Transverse colon (tissue), 4 donors: ENCODE measurements at regions of chr2 and their contacts with region 1.

Region 1: GRCh38 chr2:12120281-12121150 is 374.1 kb downstream of the LPIN1 start:
- DNase-seq: no peak
- H3K4me3 ChIP-seq: no peak overlapping the region
- H3K27ac ChIP-seq: no peak overlapping the region
- H3K4me1 ChIP-seq: no peaks in the 10 kb centered on the region
- H3K27me3 ChIP-seq: no peaks in the 10 kb centered on the region
- CTCF ChIP-seq: no peak
- EP300 ChIP-seq: no peak
- POLR2A ChIP-seq: no peak

Region 2: GRCh38 chr2:11802782-11803191 is 317.7 kb before region 1 on chr2:
- in situ Hi-C with region 1: no loop called
- intact Hi-C with region 1: no loop called
- DNase-seq: no peak
- H3K4me3 ChIP-seq: no peak overlapping the region
- H3K27ac ChIP-seq: no peak overlapping the region
- H3K4me1 ChIP-seq: no peaks in the 10 kb centered on the region
- H3K27me3 ChIP-seq: no peaks in the 10 kb centered on the region
- CTCF ChIP-seq: no peak
- EP300 ChIP-seq: no peak
- POLR2A ChIP-seq: no peak

Region 3: DNA sequence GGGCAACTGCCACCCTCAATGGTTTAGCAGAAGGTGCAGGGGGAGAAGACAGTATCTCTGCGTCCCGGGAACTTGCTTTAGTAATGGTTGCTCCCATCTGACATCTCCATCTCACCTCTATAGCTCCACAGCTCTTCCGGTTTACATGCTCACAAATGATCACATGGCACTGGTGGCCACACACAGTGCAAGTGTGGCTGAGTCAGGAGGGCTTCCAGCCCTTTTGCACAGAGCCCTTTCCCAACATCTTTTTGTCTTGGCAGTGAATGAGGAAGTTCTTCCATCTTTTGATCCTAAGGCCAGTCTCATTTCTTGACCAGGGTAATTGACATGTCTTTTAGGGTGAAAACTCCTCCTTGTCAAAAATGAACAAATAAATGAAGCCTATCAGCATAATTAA is 26.4 kb before region 1 on chr2:
- in situ Hi-C with region 1: no loop called
- intact Hi-C with region 1: loop called (anchors 2 kb)
- DNase-seq: no peak
- H3K4me3 ChIP-seq: no peak overlapping the region
- H3K27ac ChIP-seq: no peak overlapping the region
- H3K4me1 ChIP-seq: no peaks in the 10 kb centered on the region
- H3K27me3 ChIP-seq: no peaks in the 10 kb centered on the region
- CTCF ChIP-seq: no peak
- EP300 ChIP-seq: no peak
- POLR2A ChIP-seq: no peak